Mucosa of descending colon (tissue), 3 donors: ENCODE measurements at regions of chr11 and their contacts with region 1.

Region 1: GRCh38 chr11:59171508-59172322 is at the start of gene DTX4:
- DNase-seq: peak; percentile 95 to 99 (median 96)
- ATAC-seq: peak; percentile 80
- H3K4me3 ChIP-seq: peak within 1 kb of the TSS; percentile 66
- H3K4me1 ChIP-seq: peaks cover 20% of the 10 kb centered on the region
- CTCF ChIP-seq: peak; percentile 76
- total RNA-seq, gene DTX4: 37.4 to 95.7 (median 53.8) TPM

Region 2: GRCh38 chr11:58938398-58938797 is 233.3 kb before region 1 on chr11:
- intact Hi-C with region 1: no loop called
- DNase-seq: no peak
- ATAC-seq: no peak
- H3K4me3 ChIP-seq: no peak overlapping the region
- H3K4me1 ChIP-seq: no peaks in the 10 kb centered on the region
- CTCF ChIP-seq: no peak

Region 3: GRCh38 chr11:59206635-59207034 is 34.9 kb after region 1 on chr11:
- intact Hi-C with region 1: loop called in 1 of 2 experiments (anchors 1 kb)
- DNase-seq: peak in 1 of 3 donors; percentile 74
- ATAC-seq: peak; percentile 74
- H3K4me3 ChIP-seq: no peak overlapping the region
- H3K4me1 ChIP-seq: no peaks in the 10 kb centered on the region
- CTCF ChIP-seq: peak; percentile 6